ENCODE measurements at regions of chrX and their contacts with region 1.

Region 1: DNA sequence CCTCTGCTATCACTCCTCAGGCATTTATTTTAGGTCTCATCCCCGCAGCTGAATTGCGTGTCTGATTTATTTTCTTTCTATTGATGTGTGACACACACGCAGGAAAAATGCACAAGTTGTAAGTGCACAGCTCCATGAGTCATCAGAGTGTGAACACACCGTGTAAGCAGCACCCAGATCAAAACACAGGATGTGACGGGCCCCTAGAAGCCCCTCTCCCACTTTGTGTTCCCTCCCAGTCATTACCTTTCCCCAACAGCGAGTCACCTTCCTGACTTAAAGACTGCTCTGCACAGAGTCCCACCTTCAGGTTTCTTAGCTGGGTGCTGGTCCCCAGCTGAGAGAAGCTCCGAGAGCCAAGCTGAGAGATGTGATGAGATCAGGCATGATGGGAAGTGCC is 436.7 kb downstream of the MID1IP1 start:
- DNase-seq: no peak
- H3K4me3 ChIP-seq: no peak overlapping the region
- H3K27ac ChIP-seq: no peak overlapping the region
- H3K27me3 ChIP-seq: peaks cover 0 to 80% (median 25%) of the 10 kb centered on the region in 45 donors
- CTCF ChIP-seq: no peak

Region 2: GRCh38 chrX:39149761-39150160 is 88.2 kb before region 1 on chrX:
- intact Hi-C with region 1: no loop called
- DNase-seq: peak; percentile 28 to 75 (median 65)
- H3K4me3 ChIP-seq: peak overlapping the region in 1 of 59 donors; percentile 3
- H3K27ac ChIP-seq: no peak overlapping the region
- H3K27me3 ChIP-seq: peaks cover 0 to 79% (median 18%) of the 10 kb centered on the region in 45 donors
- CTCF ChIP-seq: peak; percentile 48 to 90 (median 72)

Region 3: GRCh38 chrX:39162322-39162735 is 75.7 kb before region 1 on chrX:
- intact Hi-C with region 1: loop called in 1 of 2 experiments (anchors 5 kb)
- DNase-seq: peak in 2 of 10 donors; percentile 28 to 46
- H3K4me3 ChIP-seq: peak overlapping the region in 41 of 59 donors; percentile 2 to 57 (median 21)
- H3K27ac ChIP-seq: no peak overlapping the region
- H3K27me3 ChIP-seq: peaks cover 0 to 84% (median 30%) of the 10 kb centered on the region in 45 donors
- CTCF ChIP-seq: peak in 34 of 56 donors; percentile 8 to 46 (median 26)